Activated B cell treated with CpG ODN at 0.5 μM for 24 hours (primary cell): ENCODE measurements at regions of chr12 and their contacts with region 1.

Region 1: GRCh38 chr12:25241167-25242020 is 9.3 kb downstream of the KRAS start:
- DNase-seq: no peak
- ATAC-seq: peak; percentile 72
- H3K4me3 Mint-ChIP-seq: no peak overlapping the region
- H3K27ac Mint-ChIP-seq: no peak overlapping the region
- H3K4me1 Mint-ChIP-seq: peaks cover 15% of the 10 kb centered on the region
- H3K27me3 Mint-ChIP-seq: no peaks in the 10 kb centered on the region
- CTCF ChIP-seq: peak; percentile 28

Region 2: DNA sequence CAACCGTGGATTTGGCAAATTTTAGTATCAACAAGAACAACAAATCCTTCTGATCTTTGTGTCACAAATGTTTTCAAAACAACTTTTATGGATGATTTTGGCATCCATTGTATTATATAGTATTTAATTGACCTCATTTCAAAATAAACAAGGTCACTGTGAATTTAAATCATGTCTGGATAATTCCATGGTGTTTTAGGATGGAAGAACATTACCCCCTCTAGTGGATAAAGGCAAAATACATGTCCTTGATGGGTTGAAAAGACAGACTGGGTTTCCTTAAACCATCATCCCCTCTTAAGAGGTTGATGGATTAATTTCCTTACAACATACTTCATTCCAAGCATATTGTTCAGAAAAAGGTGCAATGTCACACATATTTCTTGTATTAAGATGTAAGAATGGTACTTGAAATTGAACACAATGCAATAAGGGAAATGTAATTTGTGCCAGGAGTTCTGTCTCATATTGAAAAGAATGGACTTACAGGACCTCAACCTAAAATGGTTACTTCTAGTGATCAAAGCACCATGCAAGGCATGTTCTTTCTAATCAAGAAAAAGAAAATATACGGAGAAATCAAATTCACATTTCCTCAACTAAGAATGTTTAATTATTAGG is 644.5 kb before region 1 on chr12:
- CTCF ChIA-PET with region 1: no interaction called
- POLR2A ChIA-PET with region 1: no interaction called
- intact Hi-C with region 1: no loop called
- DNase-seq: no peak
- ATAC-seq: no peak
- H3K4me3 Mint-ChIP-seq: no peak overlapping the region
- H3K27ac Mint-ChIP-seq: no peak overlapping the region
- H3K4me1 Mint-ChIP-seq: peaks cover 42% of the 10 kb centered on the region
- H3K27me3 Mint-ChIP-seq: no peaks in the 10 kb centered on the region
- CTCF ChIP-seq: no peak

Region 3: GRCh38 chr12:25208554-25208953 is 32.8 kb before region 1 on chr12:
- CTCF ChIA-PET with region 1: interaction called, 3 read pairs
- POLR2A ChIA-PET with region 1: no interaction called
- intact Hi-C with region 1: loop called (anchors 2 kb)
- DNase-seq: no peak
- ATAC-seq: no peak
- H3K4me3 Mint-ChIP-seq: no peak overlapping the region
- H3K27ac Mint-ChIP-seq: no peak overlapping the region
- H3K4me1 Mint-ChIP-seq: no peaks in the 10 kb centered on the region
- H3K27me3 Mint-ChIP-seq: no peaks in the 10 kb centered on the region
- CTCF ChIP-seq: no peak

Region 4: DNA sequence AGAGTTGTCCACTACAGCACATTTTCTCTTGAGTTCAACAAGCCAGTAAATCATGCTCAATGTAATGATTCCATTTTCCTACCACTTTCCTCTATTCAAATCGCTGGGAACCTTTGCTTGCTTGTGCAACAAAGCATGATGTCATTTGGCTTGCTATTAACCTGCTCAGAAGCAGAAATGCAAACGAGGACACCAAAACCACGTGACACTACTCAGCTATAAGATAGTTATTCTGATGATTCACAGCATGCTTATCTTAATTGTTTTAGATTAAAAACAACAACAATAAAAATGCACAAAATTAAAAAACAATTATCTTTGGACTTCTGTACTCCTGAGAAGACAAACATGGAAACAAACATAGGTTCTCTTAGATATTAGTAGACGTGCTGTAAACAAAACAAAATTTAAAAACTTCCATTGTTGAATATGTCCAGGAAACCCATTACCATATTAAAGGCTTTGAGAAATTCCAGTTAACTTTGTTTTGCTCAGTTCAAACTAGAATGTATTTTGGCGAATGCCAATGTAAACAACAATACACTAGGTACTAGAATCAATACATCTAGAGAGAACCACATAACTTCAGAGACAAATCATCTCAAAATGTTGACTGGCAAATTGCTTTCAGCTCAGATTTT is 86.8 kb after region 1 on chr12:
- CTCF ChIA-PET with region 1: interaction called, 3 read pairs
- POLR2A ChIA-PET with region 1: interaction called, 14 read pairs
- intact Hi-C with region 1: no loop called
- DNase-seq: no peak
- ATAC-seq: peak; percentile 47
- H3K4me3 Mint-ChIP-seq: no peak overlapping the region
- H3K27ac Mint-ChIP-seq: no peak overlapping the region
- H3K4me1 Mint-ChIP-seq: peaks cover 25% of the 10 kb centered on the region
- H3K27me3 Mint-ChIP-seq: no peaks in the 10 kb centered on the region
- CTCF ChIP-seq: no peak